Uterus (tissue), 4 donors: ENCODE measurements at regions of chr16 and their contacts with region 1.

Region 1: DNA sequence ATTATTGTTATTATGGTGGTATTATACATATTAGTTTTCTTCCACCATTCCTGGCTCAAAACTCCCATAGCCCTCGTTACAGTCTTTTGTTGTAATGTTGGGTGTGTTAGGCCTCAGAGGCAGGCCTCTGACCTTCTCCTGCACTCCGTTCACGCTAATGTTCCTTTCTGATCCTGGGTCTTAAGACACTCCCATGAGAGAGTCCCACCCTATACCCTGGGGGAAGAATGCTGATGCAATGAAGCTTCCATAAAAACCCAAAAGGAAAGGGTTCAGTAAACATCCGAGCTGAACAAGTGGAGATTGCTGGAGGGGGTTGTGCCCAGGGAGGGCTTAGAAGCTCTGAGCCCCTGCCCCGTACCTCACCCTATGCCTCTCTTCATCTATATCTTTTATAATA is 141.3 kb upstream of the NETO2 start:
- DNase-seq: no peak
- H3K4me3 ChIP-seq: no peak overlapping the region
- H3K27ac ChIP-seq: no peak overlapping the region
- H3K4me1 ChIP-seq: no peaks in the 10 kb centered on the region
- H3K27me3 ChIP-seq: no peaks in the 10 kb centered on the region
- CTCF ChIP-seq: no peak
- POLR2A ChIP-seq: no peak

Region 2: GRCh38 chr16:47204736-47205504 is 80.1 kb before region 1 on chr16:
- intact Hi-C with region 1: no loop called
- DNase-seq: no peak
- H3K4me3 ChIP-seq: no peak overlapping the region
- H3K27ac ChIP-seq: no peak overlapping the region
- H3K4me1 ChIP-seq: no peaks in the 10 kb centered on the region
- H3K27me3 ChIP-seq: no peaks in the 10 kb centered on the region
- CTCF ChIP-seq: no peak
- POLR2A ChIP-seq: no peak

Region 3: DNA sequence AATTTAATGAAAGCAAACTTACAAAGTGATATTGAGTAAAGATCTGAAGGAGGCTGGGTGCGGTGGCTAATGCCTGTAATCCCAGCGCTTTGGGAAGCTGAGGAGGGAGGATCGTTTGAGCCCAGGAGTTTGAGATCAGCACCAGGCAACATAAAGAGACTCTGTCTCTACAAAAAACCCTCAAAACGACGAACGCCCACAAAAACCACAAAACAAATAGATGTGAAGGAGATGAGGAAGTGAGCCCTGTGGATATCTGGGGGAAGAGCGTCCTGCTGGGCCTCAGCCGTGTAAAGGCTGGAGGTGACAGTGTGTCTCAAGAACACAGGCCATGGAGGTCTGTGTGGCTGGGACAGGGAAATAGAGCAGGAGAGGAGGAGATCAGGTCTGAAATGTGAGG is 107.1 kb after region 1 on chr16:
- intact Hi-C with region 1: no loop called
- DNase-seq: no peak
- H3K4me3 ChIP-seq: no peak overlapping the region
- H3K27ac ChIP-seq: no peak overlapping the region
- H3K4me1 ChIP-seq: no peaks in the 10 kb centered on the region
- H3K27me3 ChIP-seq: no peaks in the 10 kb centered on the region
- CTCF ChIP-seq: no peak
- POLR2A ChIP-seq: no peak

Region 4: DNA sequence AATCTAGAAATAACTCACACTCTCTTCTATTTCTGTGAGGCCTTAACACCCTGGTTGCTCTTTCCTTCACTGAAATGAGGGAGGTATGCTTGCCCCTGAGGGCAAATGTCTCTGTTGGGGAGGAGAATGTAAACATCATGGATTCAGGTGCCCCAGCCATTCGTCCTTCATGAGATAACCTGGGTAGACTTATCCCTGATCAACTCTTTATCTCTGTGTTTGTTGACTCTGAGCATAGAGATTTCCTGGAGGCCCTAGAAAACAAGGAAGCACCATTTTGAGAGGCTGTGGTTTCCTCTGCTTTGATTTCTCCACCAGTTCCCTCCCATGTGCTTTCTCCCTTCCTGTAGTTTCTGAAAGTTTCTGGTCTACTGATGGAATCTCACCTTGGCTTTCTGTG is 253.5 kb after region 1 on chr16:
- intact Hi-C with region 1: loop called (anchors 10 kb)
- DNase-seq: no peak
- H3K4me3 ChIP-seq: no peak overlapping the region
- H3K27ac ChIP-seq: no peak overlapping the region
- H3K4me1 ChIP-seq: no peaks in the 10 kb centered on the region
- H3K27me3 ChIP-seq: no peaks in the 10 kb centered on the region
- CTCF ChIP-seq: no peak
- POLR2A ChIP-seq: no peak